MCF 10A (cell line): ENCODE measurements at regions of chr3 and their contacts with region 1.

Region 1: DNA sequence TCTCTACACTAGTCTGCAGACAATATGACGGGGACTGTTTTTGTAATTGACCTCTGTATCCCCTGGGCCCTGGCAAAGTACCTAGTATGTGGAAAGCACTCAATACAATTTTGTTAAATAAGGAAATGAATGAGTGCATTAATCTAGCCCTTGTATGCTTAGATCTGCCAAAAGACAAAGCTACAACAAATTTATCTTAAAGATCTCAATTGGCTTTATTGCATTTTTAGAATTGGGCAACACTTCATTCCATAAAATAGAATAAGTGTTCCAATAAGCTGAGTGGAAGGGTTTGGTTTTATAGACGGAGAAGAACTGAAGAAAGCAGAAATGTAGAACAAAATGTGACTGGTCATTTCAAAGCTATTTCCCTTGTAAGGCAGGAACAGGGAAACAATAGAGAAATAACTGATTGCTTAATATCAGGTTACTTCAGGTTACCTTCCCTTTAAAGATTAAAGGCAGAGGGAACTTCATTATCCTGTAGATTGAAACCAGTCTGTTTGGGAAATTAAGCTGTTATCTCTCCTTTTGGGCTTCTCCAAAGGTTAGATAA is 108.3 kb upstream of the MME start:
- DNase-seq: peak; percentile 90
- H3K4me3 Mint-ChIP-seq: peak overlapping the region; percentile 59
- H3K27ac Mint-ChIP-seq: peak overlapping the region; percentile 86
- H3K4me1 Mint-ChIP-seq: peaks cover 31% of the 10 kb centered on the region
- H3K27me3 Mint-ChIP-seq: no peaks in the 10 kb centered on the region
- CTCF ChIP-seq: no peak

Region 2: DNA sequence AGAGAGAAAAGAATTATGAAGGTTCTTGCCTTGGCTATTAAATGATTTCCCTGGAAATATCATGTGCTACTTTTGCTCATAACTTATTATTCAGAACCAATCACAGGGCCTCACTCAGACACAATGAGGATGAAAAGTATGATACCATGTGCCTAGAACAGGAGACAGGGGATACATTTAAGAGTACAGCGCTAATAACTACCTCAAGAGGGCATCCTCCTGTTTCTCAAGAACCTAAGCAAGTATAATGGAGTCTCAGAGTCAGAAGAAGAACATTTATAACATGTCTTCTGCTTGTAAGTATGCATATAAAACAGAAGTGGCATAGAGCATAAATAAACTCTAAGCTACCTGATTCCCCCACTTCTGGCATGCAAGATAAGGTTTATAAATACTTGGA is 17.1 kb before region 1 on chr3:
- CTCF ChIA-PET with region 1: interaction called, 21 read pairs
- POLR2A ChIA-PET with region 1: interaction called, 13 read pairs
- intact Hi-C with region 1: no loop called
- DNase-seq: peak; percentile 70
- H3K4me3 Mint-ChIP-seq: no peak overlapping the region
- H3K27ac Mint-ChIP-seq: no peak overlapping the region
- H3K4me1 Mint-ChIP-seq: peaks cover 11% of the 10 kb centered on the region
- H3K27me3 Mint-ChIP-seq: no peaks in the 10 kb centered on the region
- CTCF ChIP-seq: peak; percentile 62

Region 3: GRCh38 chr3:155007684-155008211 is 35.9 kb after region 1 on chr3:
- CTCF ChIA-PET with region 1: no interaction called
- POLR2A ChIA-PET with region 1: no interaction called
- intact Hi-C with region 1: no loop called
- DNase-seq: no peak
- H3K4me3 Mint-ChIP-seq: no peak overlapping the region
- H3K27ac Mint-ChIP-seq: no peak overlapping the region
- H3K4me1 Mint-ChIP-seq: peaks cover 7% of the 10 kb centered on the region
- H3K27me3 Mint-ChIP-seq: no peaks in the 10 kb centered on the region
- CTCF ChIP-seq: no peak

Region 4: GRCh38 chr3:155065537-155065936 is 93.7 kb after region 1 on chr3:
- CTCF ChIA-PET with region 1: interaction called, 8 read pairs
- POLR2A ChIA-PET with region 1: interaction called, 29 read pairs
- intact Hi-C with region 1: loop called (anchors 5 kb)
- DNase-seq: peak; percentile 87
- H3K4me3 Mint-ChIP-seq: no peak overlapping the region
- H3K27ac Mint-ChIP-seq: peak overlapping the region; percentile 66
- H3K4me1 Mint-ChIP-seq: peaks cover 25% of the 10 kb centered on the region
- H3K27me3 Mint-ChIP-seq: no peaks in the 10 kb centered on the region
- CTCF ChIP-seq: no peak

Region 5: DNA sequence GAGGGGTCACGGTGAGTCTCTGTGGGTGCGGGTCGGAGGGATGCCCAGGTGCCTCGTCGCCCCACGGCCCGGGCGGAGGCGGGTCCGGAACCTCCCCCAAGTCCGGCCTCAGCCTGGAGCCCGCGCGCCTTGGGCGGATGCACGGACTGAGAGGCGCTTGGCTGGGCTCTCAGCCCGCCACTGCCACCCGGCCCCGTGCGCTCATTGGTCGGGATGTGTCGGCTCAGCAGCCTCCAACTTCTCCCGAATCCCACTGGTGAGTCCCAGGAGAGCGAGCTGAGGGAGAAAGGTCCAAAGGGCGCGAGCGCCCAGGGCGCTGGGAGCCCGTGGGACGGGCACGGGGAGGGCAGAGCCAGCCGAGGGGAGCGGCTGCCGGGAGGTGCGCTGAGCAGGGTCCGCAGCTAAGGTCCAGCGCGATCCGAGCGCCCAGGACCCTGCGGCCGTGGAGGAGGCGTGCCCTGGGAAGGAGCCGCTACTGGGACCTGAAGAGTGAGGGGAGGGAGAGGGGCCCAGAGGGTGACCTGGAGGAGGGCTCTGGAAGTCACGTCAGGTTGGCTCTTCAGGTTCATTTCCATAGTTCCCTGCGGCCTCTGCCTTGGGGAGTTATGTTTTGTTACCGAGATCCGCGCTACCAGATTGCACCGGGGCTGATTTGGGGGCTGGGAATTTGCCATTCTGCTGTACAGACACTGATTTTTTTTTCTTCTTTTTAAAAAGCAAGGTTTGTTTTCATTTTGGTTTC is 108.1 kb after region 1 on chr3 and contains the start of gene MME:
- CTCF ChIA-PET with region 1: interaction called, 5 read pairs
- POLR2A ChIA-PET with region 1: interaction called, 40 read pairs
- intact Hi-C with region 1: no loop called
- DNase-seq: peak; percentile 71
- H3K4me3 Mint-ChIP-seq: peak within 1 kb of the TSS; percentile 92
- H3K27ac Mint-ChIP-seq: peak within 1 kb of the TSS; percentile 84
- H3K4me1 Mint-ChIP-seq: peaks cover 35% of the 10 kb centered on the region
- H3K27me3 Mint-ChIP-seq: no peaks in the 10 kb centered on the region
- CTCF ChIP-seq: no peak
- total RNA-seq, gene MME: 26.3 and 37.0 TPM in 2 replicates

Region 6: DNA sequence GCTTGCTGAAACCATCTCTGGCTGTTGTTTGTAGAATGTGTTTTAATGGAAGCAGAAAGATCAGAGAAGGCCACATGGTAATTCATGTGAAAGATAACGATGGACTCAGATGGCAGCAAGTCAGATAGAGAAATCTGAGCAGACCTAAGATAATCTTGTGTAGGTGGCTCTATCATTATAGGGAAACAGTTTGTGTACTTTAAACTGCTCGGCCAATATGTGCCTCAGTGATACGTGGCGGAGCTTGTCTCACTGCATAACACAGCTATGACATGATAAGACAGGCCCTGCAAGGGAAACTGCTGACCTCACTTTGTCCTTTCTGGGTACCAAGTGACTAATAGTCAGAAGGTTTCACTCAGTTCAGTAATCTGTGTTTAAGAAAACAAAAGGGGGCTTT is 159.3 kb after region 1 on chr3:
- CTCF ChIA-PET with region 1: no interaction called
- POLR2A ChIA-PET with region 1: interaction called, 15 read pairs
- intact Hi-C with region 1: no loop called
- DNase-seq: peak; percentile 53
- H3K4me3 Mint-ChIP-seq: no peak overlapping the region
- H3K27ac Mint-ChIP-seq: peak overlapping the region; percentile 2
- H3K4me1 Mint-ChIP-seq: peaks cover 7% of the 10 kb centered on the region
- H3K27me3 Mint-ChIP-seq: no peaks in the 10 kb centered on the region
- CTCF ChIP-seq: no peak

Region 7: GRCh38 chr3:155232605-155233004 is 260.8 kb after region 1 on chr3:
- CTCF ChIA-PET with region 1: interaction called, 4 read pairs
- POLR2A ChIA-PET with region 1: interaction called, 6 read pairs
- intact Hi-C with region 1: loop called (anchors 5 kb)
- DNase-seq: peak; percentile 96
- H3K4me3 Mint-ChIP-seq: peak overlapping the region; percentile 1
- H3K27ac Mint-ChIP-seq: peak overlapping the region; percentile 90
- H3K4me1 Mint-ChIP-seq: peaks cover 34% of the 10 kb centered on the region
- H3K27me3 Mint-ChIP-seq: no peaks in the 10 kb centered on the region
- CTCF ChIP-seq: no peak